ENCODE measurements at regions of chr5 and their contacts with region 1.

Region 1: DNA sequence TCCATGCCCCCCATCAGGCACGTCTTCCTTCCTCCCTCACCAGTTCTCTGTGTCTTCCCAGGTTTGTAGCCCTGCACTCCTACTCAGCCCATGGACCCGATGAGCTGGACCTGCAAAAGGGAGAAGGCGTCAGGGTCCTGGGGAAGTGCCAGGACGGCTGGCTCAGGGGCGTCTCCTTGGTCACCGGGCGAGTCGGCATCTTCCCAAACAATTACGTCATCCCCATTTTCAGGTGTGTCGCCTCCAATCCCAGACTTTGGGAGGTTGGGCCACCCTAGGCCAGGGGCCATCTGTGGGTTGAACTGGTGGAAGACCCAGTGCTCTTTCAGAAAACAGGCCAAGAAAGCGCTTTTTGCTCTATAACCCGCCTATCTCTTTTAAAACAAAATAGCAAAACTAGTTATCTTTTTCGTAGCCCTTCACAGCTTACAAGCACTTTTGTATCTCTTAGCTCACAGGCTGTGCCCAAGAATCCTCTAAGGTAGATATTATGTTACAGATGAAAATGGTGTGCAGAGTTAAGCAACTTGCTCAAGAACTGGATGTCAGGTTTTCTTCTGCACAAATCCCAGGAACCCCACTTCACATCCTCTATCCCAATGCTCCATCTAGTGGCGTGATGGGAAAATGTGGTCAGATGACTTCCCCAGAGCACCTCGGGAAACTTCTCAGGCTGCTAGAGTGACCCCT is 56.2 kb downstream of the PLAC8L1 start:
- DNase-seq: peak; percentile 91
- H3K4me3 Mint-ChIP-seq: no peak overlapping the region
- H3K27ac Mint-ChIP-seq: peak overlapping the region; percentile 4
- H3K4me1 Mint-ChIP-seq: peaks cover 31% of the 10 kb centered on the region
- H3K27me3 Mint-ChIP-seq: no peaks in the 10 kb centered on the region
- CTCF ChIP-seq: peak; percentile 90

Region 2: GRCh38 chr5:145681686-145682085 is 367.5 kb before region 1 on chr5:
- CTCF ChIA-PET with region 1: interaction called, 30 read pairs
- POLR2A ChIA-PET with region 1: interaction called, 3 read pairs
- intact Hi-C with region 1: loop called (anchors 1 kb)
- DNase-seq: peak; percentile 94
- H3K4me3 Mint-ChIP-seq: no peak overlapping the region
- H3K27ac Mint-ChIP-seq: no peak overlapping the region
- H3K4me1 Mint-ChIP-seq: no peaks in the 10 kb centered on the region
- H3K27me3 Mint-ChIP-seq: no peaks in the 10 kb centered on the region
- CTCF ChIP-seq: peak; percentile 87

Region 3: DNA sequence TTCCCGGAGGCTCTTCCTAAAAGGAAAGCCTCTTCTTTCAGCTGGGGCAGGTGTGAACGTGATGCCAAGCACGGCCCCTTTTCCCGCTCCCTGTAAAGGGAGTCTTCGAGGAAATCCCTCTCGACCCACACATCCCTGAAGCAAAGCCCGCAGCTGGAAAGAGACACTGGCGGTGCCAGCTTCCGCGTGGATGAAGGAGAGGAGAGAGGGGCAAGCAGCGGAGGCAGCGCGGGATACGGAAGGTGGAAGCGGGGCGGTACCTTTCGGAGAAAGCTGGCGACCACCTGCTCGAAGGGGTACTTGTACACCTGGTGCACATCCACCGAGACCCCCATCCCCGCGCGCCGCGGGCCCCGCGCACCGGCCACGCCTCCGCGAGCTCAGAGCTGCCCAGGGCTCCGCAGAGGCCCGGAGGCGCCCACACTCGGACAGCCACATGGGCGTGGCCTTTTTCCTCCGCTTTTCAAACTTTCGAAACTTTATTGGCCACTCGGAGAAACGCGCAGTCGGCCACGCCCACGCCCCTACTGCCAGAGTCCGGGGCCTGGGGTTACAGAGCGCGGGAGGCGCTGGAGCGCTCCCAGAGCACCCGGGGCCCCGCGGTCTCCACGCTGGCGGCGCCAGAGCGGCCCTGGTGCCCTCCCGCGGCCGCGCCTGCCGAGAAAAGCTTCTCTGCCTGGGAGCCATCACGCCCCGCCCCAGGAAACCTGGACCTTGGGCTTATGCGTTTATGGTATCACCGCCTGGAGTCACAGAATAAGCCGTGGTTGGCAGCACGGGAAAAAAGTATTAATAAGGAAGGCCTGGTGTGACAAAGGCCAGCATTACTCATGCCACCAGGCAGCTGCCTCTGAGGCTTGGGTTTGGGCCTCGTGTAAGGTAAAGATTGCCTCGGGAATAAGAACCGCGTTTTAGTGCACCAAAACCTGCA is 214.0 kb before region 1 on chr5 and contains the start of gene PRELID2:
- CTCF ChIA-PET with region 1: interaction called, 144 read pairs
- POLR2A ChIA-PET with region 1: no interaction called
- intact Hi-C with region 1: loop called (anchors 2 kb)
- DNase-seq: peak; percentile 94
- H3K4me3 Mint-ChIP-seq: peak within 1 kb of the TSS; percentile 73
- H3K27ac Mint-ChIP-seq: no peak within 1 kb of the TSS
- H3K4me1 Mint-ChIP-seq: peaks cover 35% of the 10 kb centered on the region
- H3K27me3 Mint-ChIP-seq: no peaks in the 10 kb centered on the region
- CTCF ChIP-seq: no peak
- total RNA-seq, gene PRELID2: 11.4 and 11.7 TPM in 2 replicates

Region 4: GRCh38 chr5:145874765-145875164 is 174.4 kb before region 1 on chr5:
- CTCF ChIA-PET with region 1: no interaction called
- POLR2A ChIA-PET with region 1: no interaction called
- intact Hi-C with region 1: no loop called
- DNase-seq: no peak
- H3K4me3 Mint-ChIP-seq: no peak overlapping the region
- H3K27ac Mint-ChIP-seq: no peak overlapping the region
- H3K4me1 Mint-ChIP-seq: no peaks in the 10 kb centered on the region
- H3K27me3 Mint-ChIP-seq: no peaks in the 10 kb centered on the region
- CTCF ChIP-seq: no peak

Region 5: DNA sequence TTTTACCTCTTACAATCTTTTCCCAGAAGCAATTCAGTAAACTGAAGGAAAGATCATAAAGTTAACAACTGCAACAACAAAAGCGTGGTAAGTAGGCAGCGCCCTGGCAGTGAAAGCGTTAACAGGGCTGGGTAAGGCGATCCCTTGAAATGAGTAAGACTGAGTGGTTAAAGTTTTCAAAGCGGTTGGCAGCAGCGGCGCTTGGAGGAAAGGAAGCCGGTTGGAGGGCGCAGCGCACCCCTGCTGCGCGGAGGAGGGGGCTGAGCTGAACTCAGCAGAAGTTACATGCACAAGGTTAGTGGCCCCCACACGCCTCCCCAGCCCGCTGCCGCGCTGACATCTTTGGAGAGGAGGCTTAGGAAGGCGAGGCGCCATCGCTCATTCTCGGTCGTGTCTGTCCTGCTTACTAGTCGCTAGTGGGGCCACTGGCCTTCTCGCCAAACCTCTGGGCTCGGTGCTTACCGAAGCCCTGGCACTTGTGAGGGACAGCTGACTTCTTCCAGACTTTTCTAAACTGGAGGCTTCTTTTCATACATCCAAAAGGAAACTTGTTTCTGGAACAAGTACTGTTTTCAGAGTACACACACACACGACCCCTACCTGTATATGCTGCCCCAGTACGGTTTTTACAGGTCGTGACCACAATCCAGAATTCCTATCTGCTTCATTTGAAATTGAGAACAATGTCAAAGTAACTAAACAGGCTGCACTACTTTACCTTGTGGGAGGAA is 112.6 kb before region 1 on chr5 and contains the start of gene SH3RF2:
- CTCF ChIA-PET with region 1: interaction called, 7 read pairs
- POLR2A ChIA-PET with region 1: interaction called, 112 read pairs
- intact Hi-C with region 1: loop called (anchors 1 kb)
- DNase-seq: peak; percentile 94
- H3K4me3 Mint-ChIP-seq: peak within 1 kb of the TSS; percentile 87
- H3K27ac Mint-ChIP-seq: peak within 1 kb of the TSS; percentile 82
- H3K4me1 Mint-ChIP-seq: peaks cover 62% of the 10 kb centered on the region
- H3K27me3 Mint-ChIP-seq: no peaks in the 10 kb centered on the region
- CTCF ChIP-seq: no peak
- total RNA-seq, gene SH3RF2: 14.9 and 29.6 TPM in 2 replicates

Region 6: GRCh38 chr5:145981589-145982491 is 67.3 kb before region 1 on chr5:
- CTCF ChIA-PET with region 1: interaction called, 11 read pairs
- POLR2A ChIA-PET with region 1: no interaction called
- intact Hi-C with region 1: no loop called
- DNase-seq: no peak
- H3K4me3 Mint-ChIP-seq: no peak overlapping the region
- H3K27ac Mint-ChIP-seq: peak overlapping the region; percentile 26
- H3K4me1 Mint-ChIP-seq: peaks cover 10% of the 10 kb centered on the region
- H3K27me3 Mint-ChIP-seq: no peaks in the 10 kb centered on the region
- CTCF ChIP-seq: no peak

Measured in MCF 10A (cell line).